Posterior cingulate gyrus (tissue), 11 donors: ENCODE measurements at regions of chr2 and their contacts with region 1.

Region 1: DNA sequence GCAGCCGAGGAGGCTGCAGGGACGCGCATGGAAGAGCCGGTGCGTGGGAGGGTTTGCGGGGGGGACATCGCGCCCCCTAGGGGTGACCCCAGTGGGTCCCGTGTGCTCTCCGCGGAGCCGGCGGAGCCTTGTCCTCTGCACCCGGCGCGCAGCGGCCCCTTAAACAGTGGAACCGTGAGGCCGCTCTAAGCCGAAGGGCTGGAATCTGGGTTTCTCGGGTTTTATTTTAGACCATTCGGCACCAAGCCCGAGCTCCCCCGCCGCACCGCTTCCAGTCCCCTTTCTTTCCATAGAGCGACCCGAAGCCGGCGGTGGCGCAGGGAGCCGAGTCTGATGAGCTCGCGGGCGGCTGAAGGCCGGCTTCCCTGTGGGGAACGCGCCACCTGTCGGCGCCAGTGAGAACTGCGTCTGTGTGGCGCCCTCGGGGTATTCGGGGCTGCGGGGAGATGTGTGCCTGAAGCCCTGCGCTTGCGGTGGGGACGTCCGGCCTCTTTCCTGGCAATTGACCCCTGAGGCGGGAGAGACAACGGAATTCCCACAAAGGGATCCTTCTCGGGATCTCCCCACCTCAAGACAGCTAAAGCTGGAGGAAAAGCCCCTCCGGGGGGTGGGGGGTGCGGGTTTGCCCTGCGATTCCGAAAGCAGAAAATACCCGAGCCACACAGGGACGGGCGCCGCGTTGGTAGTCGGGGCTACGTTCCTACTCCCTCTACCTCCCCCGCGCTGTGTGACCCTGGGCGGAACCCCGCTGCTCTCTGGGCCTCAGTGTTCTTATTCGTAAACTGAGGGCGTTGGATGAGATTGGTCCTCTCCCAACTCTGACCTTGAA is 8.2 kb upstream of the EN1 start:
- DNase-seq: peak; percentile 42 to 96 (median 82)

Region 2: DNA sequence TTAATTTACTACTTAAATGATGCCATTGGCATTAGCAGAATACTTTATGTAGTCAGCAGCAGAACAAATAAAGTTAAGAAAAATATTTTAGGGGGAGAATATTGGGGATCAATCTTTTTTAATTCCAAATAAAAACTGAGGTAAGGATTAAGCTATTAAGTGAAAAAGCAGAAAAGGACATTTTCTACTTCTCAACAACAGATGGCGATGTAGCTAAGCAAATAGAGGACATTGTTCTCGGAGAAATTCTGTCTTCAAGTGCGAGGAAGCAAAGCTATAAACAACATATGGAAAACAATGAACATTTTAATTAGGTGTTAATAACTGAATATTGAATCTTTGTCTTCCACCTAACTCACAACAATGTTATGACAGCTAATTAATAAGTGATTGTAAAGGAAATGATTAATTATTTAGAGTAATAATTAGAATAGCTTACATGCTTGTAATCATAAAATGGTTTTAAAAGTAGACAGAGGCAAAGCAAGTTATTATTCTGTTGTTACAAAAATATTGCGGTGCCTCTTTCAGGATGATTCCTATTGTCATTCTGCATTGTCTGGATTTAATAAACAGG is 808.9 kb before region 1 on chr2:
- intact Hi-C with region 1: loop called (anchors 2 kb)
- DNase-seq: no peak

Region 3: GRCh38 chr2:118221666-118222594 is 633.7 kb before region 1 on chr2:
- intact Hi-C with region 1: loop called (anchors 1 kb)
- DNase-seq: peak in 2 of 10 donors; percentile 8 to 16

Region 4: DNA sequence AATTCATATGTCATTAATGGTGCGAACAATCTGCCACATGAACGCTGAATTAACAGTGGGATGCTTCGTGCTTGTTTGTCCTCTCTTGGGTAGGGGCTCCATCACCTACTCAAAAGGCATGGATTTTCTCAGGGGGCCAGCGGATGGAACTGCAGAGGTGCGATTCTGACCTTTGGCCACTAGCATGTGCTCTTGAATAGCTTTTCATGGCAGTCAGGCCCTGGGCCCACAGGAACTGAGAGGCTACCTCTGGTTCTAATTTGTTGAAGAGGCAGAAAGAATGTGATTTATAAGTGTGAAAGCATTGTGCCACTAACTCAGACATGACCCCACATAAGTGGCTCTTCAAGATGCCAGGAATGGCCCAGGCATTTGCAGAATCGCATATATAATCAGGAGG is 484.1 kb before region 1 on chr2:
- intact Hi-C with region 1: loop called (anchors 5 kb)
- DNase-seq: no peak

Region 5: GRCh38 chr2:118709786-118710185 is 145.9 kb before region 1 on chr2:
- intact Hi-C with region 1: no loop called
- DNase-seq: no peak

Region 6: GRCh38 chr2:119040730-119041129 is 185.1 kb after region 1 on chr2:
- intact Hi-C with region 1: no loop called
- DNase-seq: no peak